A673 (cell line): ENCODE measurements at regions of chr7 and their contacts with region 1.

Region 1: DNA sequence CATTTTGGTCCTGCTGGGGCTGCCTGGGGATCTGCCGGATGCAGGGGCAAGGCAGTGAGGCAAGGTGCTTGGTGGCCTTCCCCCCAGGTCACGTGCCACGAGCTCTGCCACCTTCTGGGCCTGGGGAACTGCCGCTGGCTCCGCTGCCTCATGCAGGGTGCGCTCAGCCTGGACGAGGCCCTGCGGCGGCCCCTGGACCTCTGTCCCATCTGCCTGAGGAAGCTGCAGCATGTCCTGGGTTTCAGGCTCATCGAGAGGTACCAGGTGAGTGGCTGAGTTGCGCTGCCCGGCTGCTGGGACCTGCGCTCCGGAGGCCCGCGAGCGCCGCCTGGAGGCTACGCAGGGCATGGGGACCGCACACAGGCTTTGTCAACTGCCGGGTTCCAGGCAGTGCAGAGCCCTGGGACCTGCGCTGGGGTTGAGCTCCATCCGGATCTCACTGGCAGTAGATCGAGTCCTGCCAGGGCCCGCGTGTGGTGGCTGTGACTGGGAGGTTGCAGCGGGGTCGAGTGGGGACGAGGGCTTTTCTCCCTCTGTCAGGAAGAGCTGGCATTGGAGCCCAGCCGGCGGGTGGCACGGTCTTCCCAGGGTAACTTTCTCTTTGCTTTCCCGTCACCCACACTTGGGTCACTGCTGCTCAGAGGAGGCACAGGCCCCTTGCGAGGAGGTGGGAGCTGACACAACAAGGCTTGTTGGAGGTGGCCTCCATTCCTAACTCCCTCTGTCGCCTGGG is 21.7 kb downstream of the AMZ1 start:
- DNase-seq: peak; percentile 67
- H3K4me3 ChIP-seq: peak overlapping the region; percentile 29
- H3K27ac ChIP-seq: no peak overlapping the region
- H3K4me1 ChIP-seq: no peaks in the 10 kb centered on the region
- H3K27me3 ChIP-seq: no peaks in the 10 kb centered on the region
- CTCF ChIP-seq: peak; percentile 97

Region 2: DNA sequence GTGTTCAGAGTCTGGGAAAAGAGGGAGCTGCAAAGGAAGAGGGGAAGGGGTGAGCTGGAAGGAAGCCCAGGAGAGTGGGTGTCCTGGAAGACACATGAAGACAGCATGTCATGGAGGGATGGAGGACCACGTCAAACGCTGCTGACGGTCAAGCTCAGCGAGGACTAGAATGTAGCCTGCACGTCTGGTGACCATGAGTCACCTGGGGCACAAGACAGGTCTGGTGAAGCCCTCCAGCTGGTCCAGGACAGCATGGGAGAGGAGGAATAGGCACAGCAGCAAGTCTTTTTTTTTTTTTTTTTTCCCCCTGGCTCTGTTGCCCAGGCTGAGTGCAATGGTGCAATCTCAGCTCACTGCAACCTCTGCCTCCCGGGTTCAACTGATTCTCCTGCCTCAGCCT is 41.3 kb before region 1 on chr7:
- CTCF ChIA-PET with region 1: interaction called, 11 read pairs
- POLR2A ChIA-PET with region 1: no interaction called
- intact Hi-C with region 1: no loop called
- DNase-seq: no peak
- H3K4me3 ChIP-seq: no peak overlapping the region
- H3K27ac ChIP-seq: no peak overlapping the region
- H3K4me1 ChIP-seq: no peaks in the 10 kb centered on the region
- H3K27me3 ChIP-seq: no peaks in the 10 kb centered on the region
- CTCF ChIP-seq: no peak

Region 3: DNA sequence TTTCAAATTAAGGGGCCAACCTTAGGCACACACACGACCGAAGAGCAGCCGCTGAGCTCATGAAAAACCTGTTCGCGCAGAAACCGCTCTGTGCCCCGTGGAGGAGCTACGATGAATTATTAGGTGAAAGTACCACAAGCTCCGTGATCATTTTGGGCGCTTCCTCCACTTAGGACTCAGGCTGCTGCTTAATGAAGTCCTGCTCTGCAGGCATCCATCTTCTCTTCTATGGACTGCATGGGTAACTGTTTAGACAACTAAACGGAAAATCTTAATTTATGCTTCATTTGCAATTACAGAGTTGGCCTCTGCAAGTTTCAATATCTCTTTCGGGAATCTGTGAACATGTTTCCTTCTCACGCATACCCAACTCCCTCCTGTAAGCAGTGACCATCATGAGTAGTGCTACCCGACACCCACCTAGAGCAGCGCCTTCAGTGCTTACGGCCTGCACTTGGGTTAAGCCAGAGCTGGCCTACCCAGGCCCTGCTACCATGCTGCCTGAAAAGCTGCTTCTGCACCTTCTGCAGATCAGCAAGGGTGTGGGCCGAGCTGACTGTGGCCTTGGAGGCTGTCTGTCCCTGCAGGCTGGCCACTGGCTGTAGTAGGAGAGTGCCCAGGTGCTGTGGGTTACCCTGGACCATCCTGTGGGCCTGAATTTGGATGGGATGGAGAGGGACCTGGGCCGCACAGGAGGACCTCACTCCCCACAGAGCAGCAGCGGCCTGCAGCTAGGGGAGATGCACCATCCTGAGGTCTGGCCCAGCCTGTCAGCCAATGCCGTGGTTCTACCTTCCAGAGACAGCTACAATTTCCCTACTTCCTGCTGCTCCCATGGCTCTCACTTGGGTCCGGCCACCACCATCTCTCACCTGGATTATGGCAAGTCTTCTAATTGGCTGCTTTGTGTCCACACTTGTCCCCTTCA is 98.4 kb after region 1 on chr7:
- CTCF ChIA-PET with region 1: no interaction called
- POLR2A ChIA-PET with region 1: no interaction called
- intact Hi-C with region 1: no loop called
- DNase-seq: peak; percentile 44
- H3K4me3 ChIP-seq: peak overlapping the region; percentile 21
- H3K27ac ChIP-seq: no peak overlapping the region
- H3K4me1 ChIP-seq: peaks cover 11% of the 10 kb centered on the region
- H3K27me3 ChIP-seq: no peaks in the 10 kb centered on the region
- CTCF ChIP-seq: no peak